ENCODE measurements at regions of chr7 and their contacts with region 1.

Region 1: DNA sequence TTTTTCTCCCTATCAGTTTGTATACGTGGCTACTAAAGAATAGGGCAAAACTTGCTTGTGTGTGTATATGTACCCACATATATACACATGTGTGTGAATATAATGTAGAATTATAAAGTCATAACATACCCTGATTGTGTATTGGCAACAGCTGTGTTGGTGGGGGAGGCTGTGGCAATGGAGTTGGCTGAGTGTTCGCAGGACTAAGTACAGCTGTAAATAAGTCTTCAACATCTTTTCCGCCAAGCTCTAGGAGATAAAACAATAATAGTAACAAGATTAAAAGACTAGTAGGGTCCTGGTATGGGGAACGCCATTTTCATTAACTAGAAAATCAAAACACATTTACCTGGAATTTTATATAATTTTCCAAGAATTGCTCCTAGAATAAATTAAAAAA is 168.4 kb downstream of the GALNT11 start:
- H3K4me3 Mint-ChIP-seq: no peak overlapping the region
- H3K27ac Mint-ChIP-seq: no peak overlapping the region
- H3K4me1 Mint-ChIP-seq: no peaks in the 10 kb centered on the region
- H3K27me3 Mint-ChIP-seq: no peaks in the 10 kb centered on the region

Region 2: GRCh38 chr7:152158801-152159587 is 34.9 kb before region 1 on chr7:
- intact Hi-C with region 1: loop called (anchors 5 kb)
- H3K4me3 Mint-ChIP-seq: no peak overlapping the region
- H3K27ac Mint-ChIP-seq: no peak overlapping the region
- H3K4me1 Mint-ChIP-seq: peaks cover 16% of the 10 kb centered on the region
- H3K27me3 Mint-ChIP-seq: no peaks in the 10 kb centered on the region

Region 3: GRCh38 chr7:152231089-152231488 is 37.2 kb after region 1 on chr7:
- intact Hi-C with region 1: no loop called
- H3K4me3 Mint-ChIP-seq: no peak overlapping the region
- H3K27ac Mint-ChIP-seq: peak overlapping the region; percentile 50
- H3K4me1 Mint-ChIP-seq: no peaks in the 10 kb centered on the region
- H3K27me3 Mint-ChIP-seq: no peaks in the 10 kb centered on the region

Region 4: DNA sequence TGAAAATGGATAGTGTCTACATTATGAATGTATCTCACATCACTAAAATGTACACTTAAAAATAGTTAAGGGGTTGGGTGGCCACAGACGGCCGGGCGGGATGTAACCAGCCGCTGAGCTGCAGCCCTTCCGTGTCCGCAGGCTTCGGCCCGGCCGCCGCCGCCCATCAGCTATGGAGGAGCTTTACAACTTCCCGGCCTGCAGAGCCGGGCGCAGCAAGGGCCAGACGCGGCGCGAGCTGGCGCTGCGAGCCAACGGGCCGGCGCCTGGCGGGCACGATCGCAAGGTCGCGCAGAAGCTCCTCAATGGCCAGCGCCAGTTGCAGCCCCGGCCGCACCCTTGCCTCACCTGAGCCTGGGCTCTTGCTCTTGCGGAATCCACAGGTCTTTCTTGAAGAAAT is 172.8 kb after region 1 on chr7:
- intact Hi-C with region 1: no loop called
- H3K4me3 Mint-ChIP-seq: no peak overlapping the region
- H3K27ac Mint-ChIP-seq: no peak overlapping the region
- H3K4me1 Mint-ChIP-seq: peaks cover 75% of the 10 kb centered on the region
- H3K27me3 Mint-ChIP-seq: no peaks in the 10 kb centered on the region